Cardiac septum (tissue), 1 donor: ENCODE measurements at regions of chrX and their contacts with region 1.

Region 1: DNA sequence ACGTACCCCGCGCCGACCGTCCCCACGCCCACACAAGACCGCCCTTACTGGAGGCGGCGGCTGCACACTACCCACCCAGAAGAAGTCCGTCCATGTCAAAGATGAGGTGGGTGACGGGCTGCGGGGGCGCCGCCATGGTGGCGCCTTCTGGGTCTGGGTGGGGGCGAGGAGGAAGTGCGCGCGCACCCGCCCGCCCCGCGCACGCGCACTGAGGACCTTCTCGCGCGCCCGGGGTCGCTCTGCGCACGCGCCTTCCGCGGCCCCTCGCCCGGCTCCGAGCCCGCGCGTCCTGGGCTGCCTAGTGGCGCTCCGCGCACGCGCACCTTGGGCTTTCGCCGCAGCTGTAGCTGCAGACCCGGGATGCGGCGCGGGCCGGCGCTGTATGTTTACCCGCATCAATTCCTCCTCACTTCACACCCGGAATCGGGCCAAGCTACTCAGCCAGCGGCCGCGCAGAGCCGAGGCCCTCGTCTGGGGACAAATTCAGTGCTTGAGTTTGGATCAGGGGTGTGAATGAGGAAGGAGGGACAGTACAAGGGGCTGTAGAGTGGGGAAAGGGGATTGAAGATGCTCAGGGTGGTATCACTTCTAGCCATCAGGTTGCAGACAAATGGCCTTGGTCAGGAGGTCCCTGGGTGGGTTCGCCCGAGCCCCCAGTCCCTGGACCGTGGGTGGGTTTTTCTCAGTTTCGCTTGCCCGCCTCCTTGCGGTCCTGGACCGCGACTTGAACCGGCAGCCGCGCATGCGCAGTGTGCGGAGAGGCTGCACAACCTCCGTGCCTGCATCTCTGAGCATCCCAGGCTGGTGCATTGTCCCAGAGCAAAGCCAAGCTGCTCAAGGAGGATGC is at the start of gene PUDP:
- DNase-seq: peak; percentile 95
- total RNA-seq, gene PUDP: 33.2 TPM

Region 2: DNA sequence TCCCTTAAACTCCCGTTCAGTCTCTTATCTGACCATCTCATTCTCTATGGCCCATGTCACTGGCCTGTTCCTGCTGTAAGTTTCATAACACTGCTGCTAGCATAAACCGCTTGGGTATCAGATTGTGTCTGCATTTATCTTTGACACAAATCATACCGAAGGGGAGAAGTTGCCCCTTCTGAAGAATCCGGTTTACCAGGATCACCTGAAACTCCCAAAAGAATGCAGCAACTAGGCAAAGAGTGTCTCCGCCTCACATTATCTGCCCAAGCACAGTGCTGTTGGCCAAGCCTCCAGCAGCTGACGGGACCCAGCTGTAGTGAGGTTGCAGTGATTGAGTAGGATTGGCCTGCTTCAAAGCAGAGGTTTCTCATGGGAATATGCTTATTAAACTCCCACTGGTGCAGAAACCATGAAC is 71.0 kb after region 1 on chrX:
- intact Hi-C with region 1: no loop called
- DNase-seq: no peak

Region 3: DNA sequence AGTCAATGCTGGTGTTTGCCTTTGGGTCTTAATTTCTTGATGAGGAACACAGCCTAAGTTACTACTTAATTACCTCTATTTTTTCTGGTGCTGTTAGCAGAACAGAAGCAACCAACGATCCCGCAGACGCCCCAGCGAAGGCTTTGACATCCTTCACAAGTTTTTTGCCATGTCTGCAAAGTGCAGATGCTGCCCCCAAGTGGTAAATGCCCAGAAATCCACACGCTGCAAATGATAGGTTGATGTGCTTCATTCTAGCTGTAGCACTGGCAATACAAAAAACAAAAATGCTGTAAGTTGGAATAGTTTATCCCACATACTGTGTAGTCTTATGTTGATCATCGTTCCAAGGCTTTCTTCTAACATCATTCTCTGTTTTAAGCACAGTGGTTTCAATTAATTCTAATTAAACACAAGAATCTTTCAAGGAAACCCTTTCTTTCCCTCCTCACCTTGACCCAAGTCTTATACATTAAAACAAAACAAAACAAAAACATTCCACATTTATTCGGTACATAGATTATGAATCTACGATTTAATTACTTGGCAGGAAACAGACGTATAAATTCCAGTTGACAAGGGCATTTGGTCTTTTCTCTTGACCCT is 777.8 kb after region 1 on chrX:
- intact Hi-C with region 1: loop called (anchors 5 kb)
- DNase-seq: no peak